ENCODE measurements at regions of chr11 and their contacts with region 1.

Region 1: GRCh38 chr11:134124660-134125451 is 56.0 kb downstream of the JAM3 start:
- DNase-seq: peak; percentile 64
- ATAC-seq: peak; percentile 61 to 73

Region 2: DNA sequence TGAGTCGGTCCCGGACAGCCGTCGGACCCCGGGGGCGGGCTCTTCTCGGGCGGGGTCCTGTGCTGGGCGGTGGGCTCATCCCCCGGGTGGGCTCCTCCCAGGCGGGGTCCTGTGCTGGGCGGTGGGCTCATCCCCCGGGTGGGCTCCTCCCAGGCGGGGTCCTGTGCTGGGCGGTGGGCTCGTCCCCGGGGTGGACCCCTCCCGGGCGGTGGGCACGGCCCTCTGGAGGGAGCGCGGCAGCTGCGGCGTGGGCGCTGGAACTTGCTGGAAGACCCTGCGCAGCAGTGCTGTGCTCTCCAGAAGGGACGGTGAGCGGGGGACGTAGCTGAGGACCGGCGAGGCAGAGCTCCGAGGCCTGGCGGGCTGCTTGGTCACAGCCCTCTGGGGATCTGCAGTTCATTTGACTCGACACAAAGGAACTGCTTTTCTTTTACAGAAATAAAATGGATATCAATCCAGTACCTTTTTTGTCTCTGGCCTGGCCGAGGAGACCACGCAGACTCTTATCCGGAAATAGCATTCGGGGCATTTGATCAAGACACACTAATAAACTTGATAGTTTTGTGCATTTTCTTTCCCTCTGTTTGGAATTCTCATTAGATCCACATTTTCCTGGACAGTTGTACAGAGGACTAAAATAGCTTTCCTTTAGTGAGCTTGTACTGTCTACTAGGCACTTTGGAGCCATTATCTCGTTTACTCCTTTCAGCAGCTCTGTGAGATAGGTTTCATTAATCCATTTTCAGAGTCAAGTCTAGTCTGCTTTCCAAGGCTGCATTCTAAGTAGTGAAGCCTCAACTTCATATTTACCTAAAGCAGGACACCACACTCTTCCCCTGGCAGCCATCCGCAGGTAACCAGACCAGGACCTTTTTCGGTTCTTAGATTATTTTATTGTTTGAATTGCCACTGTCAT is 55.2 kb before region 1 on chr11:
- intact Hi-C with region 1: loop called in 1 of 2 experiments (anchors 5 kb)
- DNase-seq: peak; percentile 37
- ATAC-seq: peak; percentile 77 to 79